GM12878 (cell line): ENCODE measurements at regions of chr1 and their contacts with region 1.

Region 1: GRCh38 chr1:15820478-15820877 is 13.0 kb upstream of the UQCRHL start:
- DNase-seq: no peak
- ATAC-seq: no peak
- H3K4me3 ChIP-seq: no peak overlapping the region
- H3K27ac ChIP-seq: no peak overlapping the region
- H3K4me1 ChIP-seq: no peaks in the 10 kb centered on the region
- H3K27me3 ChIP-seq: no peaks in the 10 kb centered on the region
- CTCF ChIP-seq: no peak
- EP300 ChIP-seq: no peak
- POLR2A ChIP-seq: no peak
- RAD21 ChIP-seq: no peak

Region 2: DNA sequence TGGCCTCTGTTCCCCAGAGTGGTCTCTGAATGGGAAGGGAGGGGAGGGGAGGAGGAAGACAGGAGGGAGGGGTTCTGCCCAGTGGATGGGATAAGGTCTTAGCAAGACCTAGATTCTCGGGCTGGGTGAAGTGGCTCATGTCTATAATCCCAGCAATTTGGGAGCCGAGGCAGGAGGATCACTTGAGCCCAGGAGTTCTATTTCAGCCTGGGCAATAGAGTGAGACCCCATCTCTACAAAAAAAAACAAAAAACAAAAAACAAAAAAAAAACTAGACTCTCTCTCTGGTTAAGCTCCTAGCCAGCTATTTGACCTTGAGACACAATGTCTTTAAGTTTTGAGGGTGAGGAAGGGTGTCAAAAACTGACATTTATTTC is 24.4 kb before region 1 on chr1:
- CTCF ChIA-PET with region 1: interaction called, 31 read pairs
- POLR2A ChIA-PET with region 1: interaction called, 4 read pairs
- RAD21 ChIA-PET with region 1: interaction called, 11 read pairs
- SMC1A ChIA-PET with region 1: interaction called, 12 read pairs
- in situ Hi-C with region 1: no loop called
- intact Hi-C with region 1: no loop called
- DNase-seq: no peak
- ATAC-seq: no peak
- H3K4me3 ChIP-seq: no peak overlapping the region
- H3K27ac ChIP-seq: no peak overlapping the region
- H3K4me1 ChIP-seq: no peaks in the 10 kb centered on the region
- H3K27me3 ChIP-seq: no peaks in the 10 kb centered on the region
- CTCF ChIP-seq: no peak
- EP300 ChIP-seq: no peak
- POLR2A ChIP-seq: no peak
- RAD21 ChIP-seq: no peak

Region 3: GRCh38 chr1:15847100-15847892 is 26.8 kb after region 1 on chr1 and contains the start of gene SPEN:
- CTCF ChIA-PET with region 1: interaction called, 51 read pairs
- POLR2A ChIA-PET with region 1: interaction called, 7 read pairs
- RAD21 ChIA-PET with region 1: interaction called, 14 read pairs
- SMC1A ChIA-PET with region 1: interaction called, 15 read pairs
- in situ Hi-C with region 1: no loop called
- intact Hi-C with region 1: no loop called
- DNase-seq: peak; percentile 82
- ATAC-seq: peak; percentile 80
- H3K4me3 ChIP-seq: peak within 1 kb of the TSS; percentile 94
- H3K27ac ChIP-seq: peak within 1 kb of the TSS; percentile 87
- H3K4me1 ChIP-seq: peaks cover 4% of the 10 kb centered on the region
- H3K27me3 ChIP-seq: no peaks in the 10 kb centered on the region
- CTCF ChIP-seq: 0 out of 6 replicates have a peak, but pooled peaks of 1 of the 3 experiments have one; percentile 4
- EP300 ChIP-seq: no peak
- POLR2A ChIP-seq: peak; percentile 83
- RAD21 ChIP-seq: no peak
- polyA plus RNA-seq, gene SPEN: 5.2 to 12.9 TPM

Region 4: DNA sequence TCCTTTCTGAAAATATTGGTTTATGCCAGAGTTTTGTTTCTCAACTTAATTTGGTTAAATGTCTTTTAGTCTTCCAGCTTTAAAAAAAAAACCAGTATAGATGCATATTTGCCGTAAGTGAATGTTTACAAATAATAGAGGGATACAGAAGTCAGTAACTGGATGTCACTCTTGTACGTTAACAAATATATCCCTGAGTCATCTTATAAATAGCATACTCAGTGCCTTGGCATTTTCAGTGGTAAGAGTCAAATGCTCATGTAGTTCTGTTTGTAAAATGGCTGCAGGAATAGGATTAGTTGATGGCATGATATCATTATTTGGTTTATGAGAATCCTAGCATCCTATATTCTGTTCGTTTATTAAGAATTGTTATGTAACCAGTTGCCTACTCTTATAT is 82.4 kb after region 1 on chr1:
- CTCF ChIA-PET with region 1: interaction called, 10 read pairs
- POLR2A ChIA-PET with region 1: interaction called, 3 read pairs
- RAD21 ChIA-PET with region 1: interaction called, 5 read pairs
- SMC1A ChIA-PET with region 1: interaction called, 15 read pairs
- in situ Hi-C with region 1: no loop called
- intact Hi-C with region 1: no loop called
- DNase-seq: no peak
- ATAC-seq: no peak
- H3K4me3 ChIP-seq: no peak overlapping the region
- H3K27ac ChIP-seq: no peak overlapping the region
- H3K4me1 ChIP-seq: no peaks in the 10 kb centered on the region; the same call in 1 of the 2 replicates
- H3K27me3 ChIP-seq: no peaks in the 10 kb centered on the region
- CTCF ChIP-seq: no peak
- EP300 ChIP-seq: no peak
- POLR2A ChIP-seq: no peak
- RAD21 ChIP-seq: no peak

Region 5: DNA sequence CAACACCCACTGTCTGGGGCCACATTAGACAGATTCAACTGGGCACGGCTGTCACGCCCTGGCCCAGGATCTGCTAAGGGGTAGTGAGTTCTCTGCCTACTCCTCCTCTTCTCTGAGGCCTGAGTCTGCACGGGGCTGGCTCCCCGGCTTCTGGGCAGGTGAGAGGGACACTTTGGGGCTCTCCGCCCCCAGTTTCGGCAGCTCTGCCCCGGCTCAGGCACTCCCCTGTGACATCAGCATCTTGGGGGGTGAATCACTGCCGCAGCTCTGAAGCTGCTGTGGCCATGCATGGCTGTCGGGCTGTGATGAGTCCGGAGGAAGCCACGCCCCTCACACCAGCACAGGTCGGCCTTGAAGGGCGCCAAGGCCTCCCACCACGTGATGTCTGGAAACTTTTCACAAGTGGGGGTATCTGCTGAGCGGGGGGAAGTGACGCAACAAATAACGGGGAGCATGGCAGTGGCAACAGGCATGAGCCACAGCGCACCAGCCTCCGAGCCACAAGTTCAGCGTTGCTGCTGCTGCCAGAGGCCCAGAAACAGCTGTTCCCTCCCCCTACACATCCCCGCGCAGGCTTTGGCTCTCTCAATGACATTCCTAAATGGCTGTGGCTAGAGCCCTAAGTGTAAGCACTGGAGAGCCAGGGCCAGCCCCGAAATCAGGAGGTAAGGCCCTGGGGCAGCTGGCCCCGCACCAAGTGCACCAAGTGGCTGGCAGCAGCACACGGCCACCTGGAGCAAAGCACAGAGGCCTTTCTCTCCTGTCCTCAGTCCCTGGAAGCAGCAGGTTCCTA is 129.2 kb after region 1 on chr1:
- CTCF ChIA-PET with region 1: interaction called, 19 read pairs
- POLR2A ChIA-PET with region 1: no interaction called
- RAD21 ChIA-PET with region 1: interaction called, 18 read pairs
- SMC1A ChIA-PET with region 1: interaction called, 5 read pairs
- in situ Hi-C with region 1: no loop called
- intact Hi-C with region 1: no loop called
- DNase-seq: peak; percentile 71
- ATAC-seq: peak; percentile 92
- H3K4me3 ChIP-seq: peak overlapping the region; percentile 34; the same call in 1 of the 2 replicates
- H3K27ac ChIP-seq: peak overlapping the region; percentile 79
- H3K4me1 ChIP-seq: peaks cover 40% of the 10 kb centered on the region
- H3K27me3 ChIP-seq: no peaks in the 10 kb centered on the region
- CTCF ChIP-seq: no peak
- EP300 ChIP-seq: no peak
- POLR2A ChIP-seq: peak; percentile 70; the same call in 1 of the 2 replicates
- RAD21 ChIP-seq: no peak

Region 6: DNA sequence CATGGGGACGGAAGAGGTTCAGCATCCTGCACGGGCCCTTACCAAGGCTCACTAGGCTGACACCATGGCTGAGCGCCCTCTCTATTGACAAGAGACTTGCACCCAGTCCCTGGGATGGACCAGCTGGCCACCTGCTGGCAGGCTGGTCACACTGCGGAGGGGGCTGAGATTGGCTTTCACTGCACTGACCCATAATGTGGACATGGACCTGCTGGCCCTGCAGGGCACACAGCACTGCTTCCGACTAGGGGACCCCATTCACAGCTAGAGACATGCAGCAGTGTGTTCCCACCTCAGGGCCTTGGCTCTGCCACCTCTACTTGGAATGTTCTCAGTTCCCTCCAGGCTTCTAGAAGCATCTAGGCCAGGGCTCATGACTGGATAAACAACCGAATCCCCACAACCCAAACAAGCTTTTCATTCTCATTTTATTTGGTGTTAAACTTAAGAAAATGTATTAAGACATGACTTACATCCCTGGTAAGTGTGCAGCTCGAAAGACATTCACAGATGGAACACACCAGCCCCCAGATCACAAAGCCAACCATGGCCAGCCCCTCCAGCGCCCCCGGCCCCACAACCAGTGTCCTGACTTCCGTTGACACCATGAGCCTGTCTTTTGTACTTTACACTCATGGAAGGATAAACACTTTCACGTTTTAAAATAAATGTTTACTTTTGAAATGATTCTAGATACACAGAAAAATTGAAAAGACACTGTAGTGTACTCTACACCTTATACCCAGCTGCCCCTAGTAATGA is 174.3 kb after region 1 on chr1:
- CTCF ChIA-PET with region 1: interaction called, 9 read pairs
- POLR2A ChIA-PET with region 1: no interaction called
- RAD21 ChIA-PET with region 1: interaction called, 11 read pairs
- SMC1A ChIA-PET with region 1: interaction called, 10 read pairs
- in situ Hi-C with region 1: no loop called
- intact Hi-C with region 1: no loop called
- DNase-seq: no peak
- ATAC-seq: peak; percentile 97
- H3K4me3 ChIP-seq: no peak overlapping the region
- H3K27ac ChIP-seq: no peak overlapping the region
- H3K4me1 ChIP-seq: no peaks in the 10 kb centered on the region
- H3K27me3 ChIP-seq: no peaks in the 10 kb centered on the region
- CTCF ChIP-seq: peak; percentile 72 to 83 (median 78)
- EP300 ChIP-seq: no peak
- POLR2A ChIP-seq: no peak
- RAD21 ChIP-seq: peak; percentile 85